ENCODE measurements at regions of chr15 and their contacts with region 1.

Region 1: GRCh38 chr15:74382004-74382816 is 14.8 kb upstream of the CYP11A1 start:
- DNase-seq: peak; percentile 93
- ATAC-seq: peak; percentile 93
- H3K4me3 ChIP-seq: no peak overlapping the region
- H3K27ac ChIP-seq: no peak overlapping the region
- H3K4me1 ChIP-seq: peaks cover 17% of the 10 kb centered on the region
- H3K27me3 ChIP-seq: no peaks in the 10 kb centered on the region
- CTCF ChIP-seq: peak; percentile 95

Region 2: DNA sequence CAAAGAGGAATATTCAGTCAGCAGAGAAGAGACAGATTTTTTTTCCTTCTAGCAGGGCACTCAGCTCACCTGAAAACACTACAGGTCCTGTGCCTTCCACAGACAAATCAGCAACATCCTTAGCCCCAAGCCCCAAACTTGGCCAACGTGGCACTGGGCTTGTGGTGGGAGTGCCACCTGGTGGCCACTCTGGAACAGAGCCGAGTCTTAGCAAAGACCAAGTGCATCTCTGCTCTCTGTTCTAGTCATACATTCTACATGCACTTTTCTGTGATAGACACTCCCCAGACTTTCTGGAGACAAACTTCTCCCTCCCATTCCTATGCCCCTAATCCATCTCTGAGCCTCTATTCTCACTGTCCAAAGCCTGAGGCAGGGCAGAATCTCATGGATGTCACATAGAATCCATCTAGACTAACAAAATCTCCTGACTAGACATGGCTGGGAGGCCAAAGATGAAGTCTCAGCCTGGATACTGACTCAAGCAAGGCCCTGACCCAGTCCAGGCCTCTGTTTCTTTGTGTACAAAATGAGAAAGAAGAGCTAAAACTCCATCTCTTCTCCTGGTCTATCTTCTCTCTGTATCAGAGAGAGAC is 56.6 kb after region 1 on chr15:
- intact Hi-C with region 1: loop called (anchors 2 kb)
- DNase-seq: peak; percentile 81
- ATAC-seq: peak; percentile 81
- H3K4me3 ChIP-seq: no peak overlapping the region
- H3K27ac ChIP-seq: no peak overlapping the region
- H3K4me1 ChIP-seq: peaks cover 6% of the 10 kb centered on the region
- H3K27me3 ChIP-seq: no peaks in the 10 kb centered on the region
- CTCF ChIP-seq: peak; percentile 91

Region 3: DNA sequence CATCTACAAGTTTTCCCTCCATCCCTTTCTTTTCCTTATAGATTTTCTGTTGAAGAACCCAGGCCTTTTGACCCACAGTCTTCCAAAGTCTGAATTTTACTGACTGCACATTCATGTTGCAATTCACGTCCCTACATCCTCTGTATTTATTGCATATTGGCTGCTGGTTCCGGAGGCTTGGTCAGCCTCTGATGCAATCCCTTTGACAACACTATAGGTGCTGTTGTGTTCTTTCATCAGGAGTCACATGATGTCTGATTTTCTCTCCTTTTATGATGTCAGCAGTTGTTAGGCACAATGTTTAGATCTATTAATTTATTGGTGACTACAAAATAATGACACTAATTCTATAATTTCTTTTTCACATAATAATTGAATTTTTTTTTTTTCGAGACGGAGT is 334.4 kb after region 1 on chr15:
- intact Hi-C with region 1: no loop called
- DNase-seq: no peak
- ATAC-seq: no peak
- H3K4me3 ChIP-seq: no peak overlapping the region
- H3K27ac ChIP-seq: no peak overlapping the region
- H3K4me1 ChIP-seq: no peaks in the 10 kb centered on the region
- H3K27me3 ChIP-seq: no peaks in the 10 kb centered on the region
- CTCF ChIP-seq: no peak

Region 4: GRCh38 chr15:74768771-74769342 is 386.6 kb after region 1 on chr15:
- intact Hi-C with region 1: loop called (anchors 10 kb)
- DNase-seq: peak; percentile 74
- ATAC-seq: peak; percentile 84
- H3K4me3 ChIP-seq: no peak overlapping the region
- H3K27ac ChIP-seq: no peak overlapping the region
- H3K4me1 ChIP-seq: peaks cover 12% of the 10 kb centered on the region
- H3K27me3 ChIP-seq: no peaks in the 10 kb centered on the region
- CTCF ChIP-seq: peak; percentile 80

Measured in upper lobe of right lung (tissue), 1 donor.